CD4-positive, alpha-beta T cell (primary cell): ENCODE measurements at regions of chr13 and their contacts with region 1.

Region 1: DNA sequence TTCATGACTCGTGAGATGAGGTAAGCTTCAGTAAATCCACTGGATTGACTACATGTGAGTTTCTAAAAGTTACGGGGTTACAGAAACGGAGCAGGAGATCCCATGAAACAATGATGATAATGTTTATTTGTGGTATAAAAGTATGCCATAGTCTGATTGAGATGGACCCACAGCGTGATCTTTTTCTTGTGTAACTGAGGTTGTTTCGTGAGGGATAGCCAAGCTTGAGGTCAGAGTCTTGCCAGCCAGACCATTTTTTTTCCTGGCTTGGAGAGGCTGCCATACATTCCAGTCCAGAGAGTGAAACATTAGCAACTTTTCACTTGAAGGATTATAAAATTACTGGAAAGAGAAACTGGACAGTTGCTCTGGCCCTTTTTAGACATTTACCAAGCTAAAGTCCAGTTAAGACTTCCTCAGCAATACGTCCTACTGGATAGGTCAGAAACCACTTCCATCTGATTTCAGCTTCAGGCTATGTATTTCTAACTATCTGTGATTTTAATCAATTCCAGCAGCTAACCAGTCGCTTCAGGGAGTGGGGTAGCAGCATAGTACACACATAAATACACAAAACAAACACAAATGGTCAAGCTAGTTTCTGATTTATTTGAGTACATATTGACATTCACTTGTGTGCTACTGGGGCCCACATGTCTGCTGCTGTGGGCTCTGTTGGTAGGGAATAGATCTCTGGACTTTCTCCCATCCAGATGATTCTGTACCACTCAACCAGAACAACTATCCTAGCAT is 194.6 kb downstream of the POSTN start:
- DNase-seq: no peak
- ATAC-seq: no peak
- H3K4me3 ChIP-seq: no peak overlapping the region
- H3K4me3 Mint-ChIP-seq: no peak overlapping the region
- H3K27ac ChIP-seq: no peak overlapping the region
- H3K27ac Mint-ChIP-seq: no peak overlapping the region
- H3K4me1 ChIP-seq: no peaks in the 10 kb centered on the region
- H3K4me1 Mint-ChIP-seq: no peaks in the 10 kb centered on the region
- H3K27me3 ChIP-seq: no peaks in the 10 kb centered on the region
- H3K27me3 Mint-ChIP-seq: no peaks in the 10 kb centered on the region
- CTCF ChIP-seq: no peak

Region 2: DNA sequence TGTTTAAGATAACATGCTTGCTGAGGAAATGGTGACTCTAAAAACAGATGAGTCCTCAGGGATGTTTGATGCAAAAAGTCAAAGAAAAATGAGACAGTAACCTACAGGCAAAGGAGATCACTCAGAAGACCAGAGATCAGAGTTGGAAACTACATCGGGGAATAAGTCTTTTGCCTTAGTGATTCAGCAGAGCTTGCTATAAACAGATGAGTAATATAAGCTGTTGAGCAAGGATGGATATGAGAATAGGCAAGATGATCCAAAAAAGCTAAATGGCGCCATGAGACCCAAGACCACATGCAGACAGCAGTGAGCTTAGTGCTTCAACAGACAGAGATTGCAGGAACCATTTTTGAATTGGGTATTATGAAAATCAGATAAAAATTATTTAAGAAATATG is 26.0 kb after region 1 on chr13:
- CTCF ChIA-PET with region 1: no interaction called
- POLR2A ChIA-PET with region 1: no interaction called
- intact Hi-C with region 1: loop called in 1 of 2 experiments (anchors 1 kb)
- DNase-seq: no peak
- ATAC-seq: no peak
- H3K4me3 ChIP-seq: no peak overlapping the region
- H3K4me3 Mint-ChIP-seq: no peak overlapping the region
- H3K27ac ChIP-seq: no peak overlapping the region
- H3K27ac Mint-ChIP-seq: no peak overlapping the region
- H3K4me1 ChIP-seq: no peaks in the 10 kb centered on the region
- H3K4me1 Mint-ChIP-seq: no peaks in the 10 kb centered on the region
- H3K27me3 ChIP-seq: no peaks in the 10 kb centered on the region
- H3K27me3 Mint-ChIP-seq: no peaks in the 10 kb centered on the region
- CTCF ChIP-seq: no peak